ENCODE measurements at regions of chr11 and their contacts with region 1.

Region 1: DNA sequence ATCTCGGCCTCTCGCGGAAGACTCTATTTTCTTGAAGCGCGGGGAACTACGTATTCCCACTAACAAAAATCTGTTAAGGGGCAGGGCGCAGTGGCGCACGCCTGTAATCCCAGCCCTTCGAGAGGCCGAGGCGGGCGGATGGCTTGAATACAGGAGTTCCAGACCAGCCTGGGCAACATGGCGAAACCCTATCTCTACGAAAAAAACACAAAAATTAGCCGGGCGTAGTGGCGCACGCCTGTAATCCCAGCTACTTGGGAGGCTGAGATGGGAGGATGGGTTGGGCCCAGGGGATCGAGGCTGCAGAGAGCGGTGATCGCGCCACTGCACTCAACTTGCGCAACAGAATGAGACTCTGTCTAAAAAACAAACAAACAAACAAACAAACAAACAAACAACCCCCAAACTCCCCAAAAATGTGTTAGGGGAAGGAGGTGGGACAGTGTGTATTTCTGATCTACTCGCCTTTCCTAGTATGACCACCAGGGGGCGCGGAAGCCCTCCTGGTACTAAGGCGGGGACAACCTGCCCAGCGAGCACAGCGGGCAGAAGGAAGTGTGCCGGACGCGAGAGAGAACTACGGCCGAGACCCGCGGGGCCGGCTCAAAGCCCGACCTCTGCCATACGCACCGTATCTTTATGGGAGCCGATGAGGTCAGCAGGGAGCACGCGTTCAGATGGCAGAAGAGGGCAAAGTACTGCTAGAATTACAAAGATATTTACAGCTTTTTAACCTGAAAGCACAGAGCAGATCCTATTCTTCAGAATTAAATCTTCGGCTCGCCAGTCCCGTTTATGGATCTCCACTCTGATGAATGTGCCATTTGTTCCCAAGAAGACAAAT is 1.3 kb upstream of the STX3 start:
- DNase-seq: peak; percentile 88
- H3K4me3 ChIP-seq: peak overlapping the region; percentile 93 to 98
- H3K27ac ChIP-seq: peak overlapping the region; percentile 94 to 95
- H3K4me1 ChIP-seq: peaks cover 4% of the 10 kb centered on the region
- H3K27me3 ChIP-seq: no peaks in the 10 kb centered on the region
- CTCF ChIP-seq: peak; percentile 82 to 99 (median 94)
- POLR2A ChIP-seq: no peak

Region 2: DNA sequence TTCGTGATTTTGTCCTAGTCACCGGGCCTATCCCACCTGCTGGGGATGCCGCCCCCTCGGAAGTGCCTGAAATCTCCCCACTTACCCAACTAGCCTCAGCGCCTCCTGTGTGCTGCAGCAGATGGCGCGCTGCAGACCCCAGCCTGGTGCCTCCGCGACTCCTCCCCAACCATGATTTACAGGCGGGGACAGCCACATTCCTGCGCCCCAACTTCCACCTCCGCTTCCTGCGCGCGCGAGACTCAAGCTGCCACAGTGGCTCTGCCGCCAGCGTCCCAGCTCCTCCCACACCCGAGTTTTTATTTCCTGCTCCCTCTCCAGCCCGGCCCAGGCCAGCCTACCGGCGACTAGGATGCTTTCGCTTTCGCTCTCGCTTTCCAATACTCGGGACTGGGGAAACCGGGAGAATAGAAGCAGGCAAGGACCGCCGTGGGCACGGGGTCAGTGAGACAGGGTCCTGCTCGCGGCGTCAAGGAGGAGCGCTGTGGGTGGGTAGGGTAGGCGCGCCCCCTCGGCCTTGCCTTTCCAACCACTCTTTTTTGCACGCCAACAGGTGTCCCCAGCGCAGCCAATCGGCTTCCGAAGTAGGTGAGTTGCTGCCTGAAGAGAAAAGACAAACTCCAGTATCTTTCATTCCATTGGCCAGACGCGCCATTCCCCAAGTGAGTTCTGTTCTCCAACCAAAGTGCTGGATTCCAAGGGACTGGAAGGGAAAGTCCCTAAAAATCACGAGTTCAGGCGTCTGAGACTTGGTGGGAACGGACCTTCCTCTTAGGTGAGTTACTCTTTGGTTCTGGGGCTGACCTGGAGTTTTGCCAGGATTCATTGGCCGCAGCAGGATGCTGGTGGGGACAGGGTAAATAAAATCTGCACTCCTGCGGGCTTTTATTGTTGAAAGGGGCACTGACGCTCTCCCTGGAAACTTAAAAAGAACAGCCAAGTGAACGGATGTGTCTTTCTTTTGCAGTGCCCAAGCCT is 611.1 kb before region 1 on chr11 and contains the start of gene FAM111A:
- intact Hi-C with region 1: loop called (anchors 10 kb)
- DNase-seq: peak; percentile 90
- H3K4me3 ChIP-seq: peak within 1 kb of the TSS; percentile 64 to 77
- H3K27ac ChIP-seq: peak within 1 kb of the TSS; percentile 90 to 95
- H3K4me1 ChIP-seq: peaks cover 5% of the 10 kb centered on the region
- H3K27me3 ChIP-seq: no peaks in the 10 kb centered on the region
- CTCF ChIP-seq: peak in 2 of 4 experiments; percentile 10 to 13
- POLR2A ChIP-seq: peak; percentile 32
- total RNA-seq, gene FAM111A: 49.5 to 60.3 TPM

Region 3: GRCh38 chr11:59668950-59669610 is 84.8 kb before region 1 on chr11 and contains the start of gene PATL1:
- intact Hi-C with region 1: loop called (anchors 2 kb)
- DNase-seq: peak; percentile 99
- H3K4me3 ChIP-seq: peak within 1 kb of the TSS; percentile 68 to 83
- H3K27ac ChIP-seq: peak within 1 kb of the TSS; percentile 92 to 97
- H3K4me1 ChIP-seq: peaks cover 8% of the 10 kb centered on the region
- H3K27me3 ChIP-seq: no peaks in the 10 kb centered on the region
- CTCF ChIP-seq: peak in 1 of 4 experiments; percentile 3
- POLR2A ChIP-seq: peak; percentile 95
- total RNA-seq, gene PATL1: 10.3 to 26.2 TPM

Region 4: GRCh38 chr11:59802639-59803176 is 48.8 kb after region 1 on chr11:
- intact Hi-C with region 1: loop called (anchors 2 kb)
- DNase-seq: peak; percentile 47
- H3K4me3 ChIP-seq: no peak overlapping the region
- H3K27ac ChIP-seq: no peak overlapping the region
- H3K4me1 ChIP-seq: no peaks in the 10 kb centered on the region
- H3K27me3 ChIP-seq: no peaks in the 10 kb centered on the region
- CTCF ChIP-seq: peak in 3 of 4 experiments; percentile 74 to 81 (median 80)
- POLR2A ChIP-seq: no peak

Region 5: DNA sequence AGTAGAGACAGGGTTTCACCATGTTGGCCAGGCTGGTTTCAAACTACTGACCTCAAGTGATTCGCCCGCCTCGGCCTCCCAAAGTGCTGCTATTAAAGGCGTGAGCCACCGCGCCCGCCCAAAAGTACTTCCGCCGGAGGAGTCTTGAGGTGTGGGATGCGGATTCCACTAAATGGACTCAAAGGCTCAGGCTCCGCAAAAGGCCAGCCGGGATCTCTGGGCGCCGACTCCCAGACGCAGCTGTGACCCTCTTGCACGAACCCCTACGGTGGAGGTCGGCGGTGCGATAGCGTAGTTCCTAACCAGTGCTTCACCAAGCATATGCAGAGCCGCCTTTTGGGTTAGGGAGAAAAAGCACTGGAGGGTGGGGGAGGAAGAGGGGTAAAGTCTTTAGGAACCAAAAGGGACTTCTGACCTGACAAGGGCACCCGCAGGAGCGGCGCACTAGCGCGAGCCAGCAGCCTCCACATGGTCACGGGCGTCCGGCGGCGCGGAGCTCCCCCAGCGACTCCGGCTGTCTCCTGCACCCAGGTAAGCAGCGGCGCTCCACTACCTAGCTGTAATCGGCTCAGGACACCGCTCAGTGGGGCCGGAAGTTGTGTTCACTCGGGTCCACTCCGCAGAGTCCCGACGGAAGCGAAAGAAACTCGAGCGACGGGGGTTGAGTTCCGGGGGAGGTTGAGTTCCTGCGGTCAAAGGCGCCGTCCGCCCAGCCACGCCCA is 56.5 kb after region 1 on chr11 and contains the start of gene MRPL16:
- intact Hi-C with region 1: loop called (anchors 2 kb)
- DNase-seq: peak; percentile 86
- H3K4me3 ChIP-seq: peak within 1 kb of the TSS; percentile 79 to 93
- H3K27ac ChIP-seq: peak within 1 kb of the TSS; percentile 78 to 79
- H3K4me1 ChIP-seq: no peaks in the 10 kb centered on the region
- H3K27me3 ChIP-seq: no peaks in the 10 kb centered on the region
- CTCF ChIP-seq: peak in 2 of 4 experiments; percentile 42 to 48
- POLR2A ChIP-seq: peak; percentile 48
- total RNA-seq, gene MRPL16: 38.3 to 97.6 TPM

Region 6: DNA sequence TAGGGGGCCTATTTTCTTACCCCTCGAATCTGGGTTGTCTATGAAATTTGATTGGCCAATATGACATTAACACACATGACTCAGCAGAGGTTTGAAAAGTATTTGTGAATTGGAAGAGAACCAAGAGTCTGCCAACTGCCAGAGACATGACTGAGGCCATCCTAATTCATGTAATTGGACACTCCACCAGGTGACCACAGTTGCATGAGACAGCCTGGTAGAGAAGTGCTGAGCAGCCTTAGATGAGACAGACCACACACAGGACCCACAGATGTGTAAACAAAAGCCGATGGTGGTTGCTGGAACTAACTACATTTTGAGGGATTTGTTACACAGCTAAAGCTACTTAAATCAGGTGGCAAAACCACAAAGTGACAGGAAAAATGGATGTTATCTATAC is 674.6 kb after region 1 on chr11:
- intact Hi-C with region 1: no loop called
- DNase-seq: no peak
- H3K4me3 ChIP-seq: no peak overlapping the region
- H3K27ac ChIP-seq: no peak overlapping the region
- H3K4me1 ChIP-seq: no peaks in the 10 kb centered on the region
- H3K27me3 ChIP-seq: no peaks in the 10 kb centered on the region
- CTCF ChIP-seq: no peak
- POLR2A ChIP-seq: no peak

Measured in prostate gland (tissue), 2 donors.